Activated naive CD8-positive, alpha-beta T cell treated with anti-CD3 and anti-CD28 coated beads, Interleukin-2, amount 10 ng/mL, durations not matched to agents 7 days and 5 days (primary cell): ENCODE measurements at regions of chr3 and their contacts with region 1.

Region 1: GRCh38 chr3:127598841-127599570 is 795 bp downstream of the MCM2 start:
- DNase-seq: no peak
- ATAC-seq: no peak
- H3K4me3 Mint-ChIP-seq: peak overlapping the region; percentile 92
- H3K27ac Mint-ChIP-seq: peak overlapping the region; percentile 93
- H3K4me1 Mint-ChIP-seq: peaks cover 48% of the 10 kb centered on the region
- H3K27me3 Mint-ChIP-seq: no peaks in the 10 kb centered on the region

Region 2: GRCh38 chr3:127637546-127637945 is 38.5 kb after region 1 on chr3:
- POLR2A ChIA-PET with region 1: interaction called, 20 read pairs
- DNase-seq: peak; percentile 65
- ATAC-seq: peak; percentile 100
- H3K4me3 Mint-ChIP-seq: peak overlapping the region; percentile 61
- H3K27ac Mint-ChIP-seq: peak overlapping the region; percentile 83
- H3K4me1 Mint-ChIP-seq: peaks cover 26% of the 10 kb centered on the region
- H3K27me3 Mint-ChIP-seq: peaks cover 14% of the 10 kb centered on the region

Region 3: GRCh38 chr3:127672516-127673190 is 73.6 kb after region 1 on chr3 and contains the start of gene ABTB1:
- POLR2A ChIA-PET with region 1: interaction called, 18 read pairs
- DNase-seq: peak; percentile 90
- ATAC-seq: peak; percentile 84
- H3K4me3 Mint-ChIP-seq: peak within 1 kb of the TSS; percentile 94
- H3K27ac Mint-ChIP-seq: peak within 1 kb of the TSS; percentile 99
- H3K4me1 Mint-ChIP-seq: peaks cover 20% of the 10 kb centered on the region
- H3K27me3 Mint-ChIP-seq: no peaks in the 10 kb centered on the region
- total RNA-seq, gene ABTB1: 63.4 to 65.5 TPM

Region 4: DNA sequence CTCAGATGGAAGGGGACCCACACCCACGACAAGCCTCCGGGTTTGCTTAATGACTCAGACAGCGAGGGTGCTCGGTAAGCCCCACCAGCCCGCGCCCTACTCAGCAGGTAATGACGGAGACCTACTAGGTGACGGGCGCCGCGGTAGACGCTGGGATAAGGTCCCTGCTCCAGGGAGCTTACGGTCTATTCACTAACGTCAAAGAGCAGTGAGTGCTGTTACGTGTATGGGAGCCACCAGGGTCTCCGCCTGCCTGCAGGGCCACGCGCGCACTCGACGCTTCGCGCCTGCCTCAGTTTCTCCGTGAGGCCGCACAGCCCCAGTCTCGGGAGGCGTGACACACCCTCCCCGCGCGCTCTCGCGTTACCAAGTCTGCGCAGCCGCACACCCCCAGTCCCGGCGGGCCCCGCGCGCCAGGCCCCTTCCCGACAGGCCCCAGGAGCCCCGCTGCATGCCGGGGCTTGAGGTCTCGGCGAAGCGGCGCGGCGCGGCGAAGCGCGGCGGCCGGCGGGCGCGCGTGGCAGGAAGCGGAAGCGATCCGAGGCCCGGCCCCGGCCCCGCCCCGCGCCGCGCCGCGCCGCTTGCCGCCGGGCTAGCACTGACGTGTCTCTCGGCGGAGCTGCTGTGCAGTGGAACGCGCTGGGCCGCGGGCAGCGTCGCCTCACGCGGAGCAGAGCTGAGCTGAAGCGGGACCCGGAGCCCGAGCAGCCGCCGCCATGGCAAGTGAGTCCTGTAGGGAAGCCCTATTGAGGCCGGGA is 453.0 kb after region 1 on chr3 and contains the start of gene SEC61A1:
- POLR2A ChIA-PET with region 1: interaction called, 10 read pairs
- DNase-seq: peak; percentile 97
- ATAC-seq: peak; percentile 98
- H3K4me3 Mint-ChIP-seq: peak within 1 kb of the TSS; percentile 94
- H3K27ac Mint-ChIP-seq: peak within 1 kb of the TSS; percentile 92
- H3K4me1 Mint-ChIP-seq: peaks cover 31% of the 10 kb centered on the region
- H3K27me3 Mint-ChIP-seq: peaks cover 7% of the 10 kb centered on the region
- total RNA-seq, gene SEC61A1: 119 to 126 TPM

Region 5: DNA sequence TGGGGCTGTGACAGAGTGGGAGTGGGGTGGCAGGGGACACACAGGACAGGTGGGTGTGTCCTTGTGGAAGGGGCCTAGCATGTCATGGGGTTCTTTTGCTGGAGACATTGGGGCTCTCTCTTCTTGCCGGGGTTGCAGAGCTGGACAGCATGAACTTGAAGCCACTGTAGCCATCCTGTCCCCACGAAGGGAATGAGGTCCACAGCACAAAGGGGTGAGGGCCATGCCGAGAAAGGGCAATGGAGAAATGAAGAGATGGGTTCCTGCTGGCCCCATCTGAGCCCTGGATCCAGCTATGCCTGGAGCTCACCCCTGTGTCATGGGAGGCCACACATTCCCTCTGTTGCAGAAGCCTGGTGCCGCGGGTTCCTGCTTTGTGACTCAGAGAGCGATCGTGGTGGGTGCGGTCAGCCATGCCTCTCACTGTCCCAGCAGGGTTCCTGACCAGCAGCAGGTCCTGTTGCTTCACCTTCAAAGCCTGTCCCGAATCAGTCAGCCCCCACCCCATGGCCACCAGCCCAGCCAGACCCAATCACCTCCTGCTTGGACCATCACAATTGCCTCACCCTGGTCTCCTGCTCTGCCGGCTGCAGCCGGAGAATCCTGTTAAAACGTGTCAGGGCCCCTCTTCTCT is 817.7 kb after region 1 on chr3:
- POLR2A ChIA-PET with region 1: no interaction called
- DNase-seq: no peak
- ATAC-seq: no peak
- H3K4me3 Mint-ChIP-seq: no peak overlapping the region
- H3K27ac Mint-ChIP-seq: no peak overlapping the region
- H3K4me1 Mint-ChIP-seq: no peaks in the 10 kb centered on the region
- H3K27me3 Mint-ChIP-seq: no peaks in the 10 kb centered on the region